CD4-positive, alpha-beta T cell (primary cell): ENCODE measurements at regions of chr20 and their contacts with region 1.

Region 1: DNA sequence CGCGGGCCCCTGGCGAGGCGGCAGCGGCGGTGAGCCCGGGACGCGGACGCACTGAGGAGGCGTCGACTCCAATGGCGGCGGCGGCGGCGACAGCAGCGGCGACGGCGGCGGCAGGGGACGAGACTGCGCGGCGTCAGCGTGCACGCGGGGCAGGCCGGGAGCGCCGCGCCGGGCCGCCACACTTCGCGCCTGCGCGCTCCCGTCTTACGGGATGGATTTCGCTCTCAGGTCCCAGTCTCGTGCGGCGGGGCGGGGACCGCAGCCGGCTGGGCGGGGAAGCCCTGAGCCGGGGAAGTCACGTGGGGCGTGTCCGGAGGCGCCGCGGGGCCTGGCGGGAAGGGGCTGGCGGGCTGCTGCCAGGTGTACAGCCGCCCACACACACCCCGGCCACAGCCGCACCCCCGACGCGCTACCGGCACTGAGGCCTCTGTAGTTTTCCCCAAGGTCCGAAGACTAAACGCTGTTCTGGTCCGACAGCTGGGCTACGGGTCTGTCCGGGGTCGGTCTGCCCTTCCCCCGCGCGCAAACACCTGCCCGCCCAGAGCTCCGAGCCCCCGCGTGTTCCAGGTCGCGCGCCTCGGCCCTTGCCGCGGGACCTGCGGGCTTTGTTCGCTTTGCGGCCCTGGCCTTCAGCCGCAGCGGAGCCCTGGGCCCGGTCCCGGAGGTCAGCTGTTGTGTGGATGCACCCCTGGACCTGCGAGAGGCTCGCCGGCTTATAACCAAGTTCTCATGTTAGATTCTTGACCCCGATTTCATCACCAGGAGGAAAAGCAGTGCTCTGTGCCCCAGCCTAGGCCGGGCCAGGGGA is at the start of gene YTHDF1:
- DNase-seq: peak; percentile 86 to 98 (median 94)
- ATAC-seq: peak; percentile 95
- H3K4me3 ChIP-seq: peak within 1 kb of the TSS; percentile 75
- H3K4me3 Mint-ChIP-seq: peak within 1 kb of the TSS; percentile 93
- H3K27ac ChIP-seq: peak within 1 kb of the TSS; percentile 44 to 70
- H3K27ac Mint-ChIP-seq: peak within 1 kb of the TSS; percentile 92
- H3K4me1 ChIP-seq: peaks cover 47% of the 10 kb centered on the region
- H3K4me1 Mint-ChIP-seq: peaks cover 48% of the 10 kb centered on the region
- H3K27me3 ChIP-seq: no peaks in the 10 kb centered on the region
- H3K27me3 Mint-ChIP-seq: no peaks in the 10 kb centered on the region
- CTCF ChIP-seq: no peak
- total RNA-seq, gene YTHDF1: 43.7 to 44.1 TPM

Region 2: DNA sequence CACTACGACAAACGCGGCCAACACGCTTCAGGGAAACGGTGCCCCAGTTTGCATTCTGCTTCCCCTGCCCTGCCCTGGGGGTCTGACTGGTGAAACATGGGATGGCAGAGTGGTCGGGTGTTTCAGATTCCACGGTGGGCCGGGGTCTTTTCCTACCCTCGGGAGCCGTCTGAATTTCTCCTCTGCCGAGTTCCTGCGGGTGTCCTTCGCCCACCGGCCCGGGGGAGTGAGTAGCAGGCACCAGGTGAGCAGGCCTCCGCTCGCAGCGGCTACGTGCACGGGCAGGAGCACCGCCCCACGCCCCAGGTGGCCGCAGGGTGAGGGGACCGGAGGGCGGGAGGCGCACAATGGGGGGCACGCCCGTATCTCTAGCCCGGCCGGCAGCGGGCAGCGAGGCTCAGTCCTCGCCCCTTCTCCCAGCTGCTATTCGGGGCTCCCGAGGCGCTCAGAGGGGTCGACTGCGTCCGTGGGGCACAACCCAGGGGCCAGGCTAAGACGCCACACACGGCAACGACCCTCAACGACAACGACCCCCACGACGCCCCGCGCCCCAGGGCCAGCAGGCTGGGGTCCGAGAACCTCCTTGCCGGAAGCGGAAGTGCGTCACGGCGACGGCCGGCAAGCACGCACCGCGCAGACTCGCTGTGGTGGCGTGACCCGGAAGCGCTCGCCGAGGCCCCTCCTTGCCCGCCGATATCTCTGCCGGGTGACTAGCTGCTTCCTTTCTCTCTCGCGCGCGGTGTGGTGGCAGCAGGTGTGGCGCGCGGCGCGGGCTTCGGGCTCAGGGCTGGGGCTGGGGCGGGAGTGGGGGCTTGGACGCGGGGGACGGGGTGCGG is 829.6 kb before region 1 on chr20 and contains the start of gene RPS21:
- CTCF ChIA-PET with region 1: no interaction called
- POLR2A ChIA-PET with region 1: no interaction called
- intact Hi-C with region 1: loop called in 1 of 2 experiments (anchors 10 kb)
- DNase-seq: peak; percentile 89 to 97 (median 92)
- ATAC-seq: peak; percentile 87
- H3K4me3 ChIP-seq: peak within 1 kb of the TSS; percentile 91
- H3K4me3 Mint-ChIP-seq: peak within 1 kb of the TSS; percentile 95
- H3K27ac ChIP-seq: peak within 1 kb of the TSS; percentile 84 to 94
- H3K27ac Mint-ChIP-seq: peak within 1 kb of the TSS; percentile 91
- H3K4me1 ChIP-seq: peaks cover 39% of the 10 kb centered on the region
- H3K4me1 Mint-ChIP-seq: peaks cover 58% of the 10 kb centered on the region
- H3K27me3 ChIP-seq: no peaks in the 10 kb centered on the region
- H3K27me3 Mint-ChIP-seq: no peaks in the 10 kb centered on the region
- CTCF ChIP-seq: no peak
- total RNA-seq, gene RPS21: 3,015 to 3,210 TPM

Region 3: GRCh38 chr20:62407221-62407992 is 808.8 kb before region 1 on chr20 and contains the start of gene CABLES2:
- CTCF ChIA-PET with region 1: no interaction called
- POLR2A ChIA-PET with region 1: no interaction called
- intact Hi-C with region 1: loop called in 1 of 2 experiments (anchors 5 kb)
- DNase-seq: peak; percentile 83 to 96 (median 88)
- ATAC-seq: peak; percentile 95
- H3K4me3 ChIP-seq: peak within 1 kb of the TSS; percentile 72
- H3K4me3 Mint-ChIP-seq: peak within 1 kb of the TSS; percentile 84
- H3K27ac ChIP-seq: peak within 1 kb of the TSS in 1 of 2 donors; percentile 24
- H3K27ac Mint-ChIP-seq: no peak within 1 kb of the TSS
- H3K4me1 ChIP-seq: peaks cover 46% of the 10 kb centered on the region
- H3K4me1 Mint-ChIP-seq: peaks cover 18% of the 10 kb centered on the region
- H3K27me3 ChIP-seq: no peaks in the 10 kb centered on the region
- H3K27me3 Mint-ChIP-seq: no peaks in the 10 kb centered on the region
- CTCF ChIP-seq: no peak
- total RNA-seq, gene CABLES2: 4.4 TPM

Region 4: GRCh38 chr20:62900052-62900691 is 316.1 kb before region 1 on chr20:
- CTCF ChIA-PET with region 1: no interaction called
- POLR2A ChIA-PET with region 1: no interaction called
- intact Hi-C with region 1: no loop called
- DNase-seq: peak; percentile 63 to 89 (median 76)
- ATAC-seq: peak; percentile 89
- H3K4me3 ChIP-seq: no peak overlapping the region
- H3K4me3 Mint-ChIP-seq: peak overlapping the region; percentile 71
- H3K27ac ChIP-seq: peak overlapping the region; percentile 8 to 47
- H3K27ac Mint-ChIP-seq: peak overlapping the region; percentile 92
- H3K4me1 ChIP-seq: peaks cover 29% of the 10 kb centered on the region
- H3K4me1 Mint-ChIP-seq: peaks cover 40% of the 10 kb centered on the region
- H3K27me3 ChIP-seq: no peaks in the 10 kb centered on the region
- H3K27me3 Mint-ChIP-seq: no peaks in the 10 kb centered on the region
- CTCF ChIP-seq: peak; percentile 96

Region 5: GRCh38 chr20:63272584-63273579 is 56.6 kb after region 1 on chr20 and contains the start of gene ARFGAP1:
- CTCF ChIA-PET with region 1: interaction called, 3 read pairs
- POLR2A ChIA-PET with region 1: interaction called, 9 read pairs
- intact Hi-C with region 1: loop called in 1 of 2 experiments (anchors 1 kb)
- DNase-seq: peak; percentile 73 to 94 (median 84)
- ATAC-seq: peak; percentile 93
- H3K4me3 ChIP-seq: peak within 1 kb of the TSS; percentile 80
- H3K4me3 Mint-ChIP-seq: peak within 1 kb of the TSS; percentile 90
- H3K27ac ChIP-seq: no peak within 1 kb of the TSS
- H3K27ac Mint-ChIP-seq: peak within 1 kb of the TSS; percentile 82
- H3K4me1 ChIP-seq: peaks cover 26% of the 10 kb centered on the region
- H3K4me1 Mint-ChIP-seq: peaks cover 31% of the 10 kb centered on the region
- H3K27me3 ChIP-seq: no peaks in the 10 kb centered on the region
- H3K27me3 Mint-ChIP-seq: no peaks in the 10 kb centered on the region
- CTCF ChIP-seq: no peak
- total RNA-seq, gene ARFGAP1: 120 TPM